ENCODE measurements at regions of chr1 and their contacts with region 1.

Region 1: GRCh38 chr1:60017508-60018205 is 55.9 kb downstream of the C1orf87 start:
- DNase-seq: no peak
- H3K4me3 ChIP-seq: no peak overlapping the region
- H3K27ac ChIP-seq: no peak overlapping the region
- H3K4me1 ChIP-seq: no peaks in the 10 kb centered on the region
- H3K27me3 ChIP-seq: no peaks in the 10 kb centered on the region
- CTCF ChIP-seq: no peak

Region 2: DNA sequence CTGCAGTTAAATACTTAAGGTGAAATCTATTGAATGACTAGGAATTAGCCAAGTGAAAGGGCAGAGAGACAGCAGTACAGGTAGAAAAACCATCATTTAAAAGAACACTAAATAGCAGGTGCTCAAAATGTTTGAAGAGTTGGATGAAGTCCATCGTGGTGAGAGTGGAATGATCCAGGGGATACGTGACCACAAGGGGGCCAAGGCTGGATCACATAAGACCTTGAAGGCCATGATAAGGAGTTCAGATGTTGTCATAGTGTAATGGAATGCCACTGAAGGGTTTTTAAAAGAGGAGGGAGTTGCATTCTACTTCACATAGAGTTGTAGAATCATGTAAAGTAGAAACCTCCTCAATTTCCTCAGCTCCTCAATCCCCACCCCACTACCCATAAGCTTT is 237.7 kb before region 1 on chr1:
- CTCF ChIA-PET with region 1: no interaction called
- POLR2A ChIA-PET with region 1: interaction called, 41 read pairs
- intact Hi-C with region 1: no loop called
- DNase-seq: no peak
- H3K4me3 ChIP-seq: no peak overlapping the region
- H3K27ac ChIP-seq: no peak overlapping the region
- H3K4me1 ChIP-seq: no peaks in the 10 kb centered on the region
- H3K27me3 ChIP-seq: no peaks in the 10 kb centered on the region
- CTCF ChIP-seq: no peak